Right lobe of liver (tissue), 6 donors: ENCODE measurements at regions of chr12 and their contacts with region 1.

Region 1: DNA sequence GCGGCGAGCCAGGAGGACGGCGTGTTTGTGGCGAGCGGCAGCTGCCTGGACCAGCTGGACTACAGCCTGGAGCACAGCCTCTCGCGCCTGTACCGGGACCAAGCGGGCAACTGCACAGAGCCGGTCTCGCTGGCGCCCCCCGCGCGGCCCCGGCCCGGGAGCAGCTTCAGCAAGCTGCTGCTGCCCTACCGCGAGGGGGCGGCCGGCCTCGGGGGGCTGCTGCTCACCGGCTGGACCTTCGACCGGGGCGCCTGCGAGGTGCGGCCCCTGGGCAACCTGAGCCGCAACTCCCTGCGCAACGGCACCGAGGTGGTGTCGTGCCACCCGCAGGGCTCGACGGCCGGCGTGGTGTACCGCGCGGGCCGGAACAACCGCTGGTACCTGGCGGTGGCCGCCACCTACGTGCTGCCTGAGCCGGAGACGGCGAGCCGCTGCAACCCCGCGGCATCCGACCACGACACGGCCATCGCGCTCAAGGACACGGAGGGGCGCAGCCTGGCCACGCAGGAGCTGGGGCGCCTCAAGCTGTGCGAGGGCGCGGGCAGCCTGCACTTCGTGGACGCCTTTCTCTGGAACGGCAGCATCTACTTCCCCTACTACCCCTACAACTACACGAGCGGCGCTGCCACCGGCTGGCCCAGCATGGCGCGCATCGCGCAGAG is 873 bp downstream of the PLXNC1 start:
- DNase-seq: peak; percentile 65 to 83 (median 69)
- ATAC-seq: peak in 3 of 4 donors; percentile 5 to 44 (median 14)
- H3K4me3 ChIP-seq: peak overlapping the region; percentile 45 to 55 (median 54)
- H3K27ac ChIP-seq: peak overlapping the region in 1 of 3 donors; percentile 49
- H3K4me1 ChIP-seq: peaks cover 0 to 44% (median 15%) of the 10 kb centered on the region in 4 donors
- H3K27me3 ChIP-seq: no peaks in the 10 kb centered on the region
- CTCF ChIP-seq: peak in 3 of 4 donors; percentile 32 to 40 (median 35)
- POLR2A ChIP-seq: no peak

Region 2: GRCh38 chr12:94101738-94102660 is 47.3 kb before region 1 on chr12:
- intact Hi-C with region 1: no loop called
- DNase-seq: peak; percentile 80 to 81 (median 81)
- ATAC-seq: peak; percentile 92 to 95 (median 92)
- H3K4me3 ChIP-seq: peak overlapping the region; percentile 37 to 61 (median 45)
- H3K27ac ChIP-seq: no peak overlapping the region
- H3K4me1 ChIP-seq: peaks cover 0 to 10% (median 0%) of the 10 kb centered on the region in 4 donors
- H3K27me3 ChIP-seq: no peaks in the 10 kb centered on the region
- CTCF ChIP-seq: peak; percentile 77 to 87 (median 80)
- POLR2A ChIP-seq: no peak

Region 3: DNA sequence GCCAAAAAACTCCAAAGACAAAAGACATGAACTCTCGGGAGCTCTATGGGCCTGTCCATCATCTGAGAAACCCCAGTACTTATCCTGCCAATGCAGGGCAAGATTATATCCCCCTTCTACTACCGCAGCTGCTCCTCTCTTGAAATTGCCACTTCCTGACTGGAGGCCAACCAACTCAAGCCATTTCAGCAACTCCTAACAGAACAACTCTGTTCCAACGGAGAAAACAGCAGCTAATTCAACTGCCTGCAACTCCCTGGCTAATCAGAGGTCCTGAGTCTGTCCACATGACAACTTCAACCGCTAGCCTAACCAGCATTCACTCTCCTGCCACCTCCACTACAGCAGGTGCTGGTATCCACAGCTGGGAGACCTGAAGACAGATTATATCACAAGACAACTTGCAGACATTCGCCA is 286.3 kb after region 1 on chr12:
- intact Hi-C with region 1: loop called (anchors 10 kb)
- DNase-seq: no peak
- ATAC-seq: no peak
- H3K4me3 ChIP-seq: no peak overlapping the region
- H3K27ac ChIP-seq: no peak overlapping the region
- H3K4me1 ChIP-seq: peaks cover 0 to 8% (median 0%) of the 10 kb centered on the region in 4 donors
- H3K27me3 ChIP-seq: no peaks in the 10 kb centered on the region
- CTCF ChIP-seq: no peak
- POLR2A ChIP-seq: no peak

Region 4: DNA sequence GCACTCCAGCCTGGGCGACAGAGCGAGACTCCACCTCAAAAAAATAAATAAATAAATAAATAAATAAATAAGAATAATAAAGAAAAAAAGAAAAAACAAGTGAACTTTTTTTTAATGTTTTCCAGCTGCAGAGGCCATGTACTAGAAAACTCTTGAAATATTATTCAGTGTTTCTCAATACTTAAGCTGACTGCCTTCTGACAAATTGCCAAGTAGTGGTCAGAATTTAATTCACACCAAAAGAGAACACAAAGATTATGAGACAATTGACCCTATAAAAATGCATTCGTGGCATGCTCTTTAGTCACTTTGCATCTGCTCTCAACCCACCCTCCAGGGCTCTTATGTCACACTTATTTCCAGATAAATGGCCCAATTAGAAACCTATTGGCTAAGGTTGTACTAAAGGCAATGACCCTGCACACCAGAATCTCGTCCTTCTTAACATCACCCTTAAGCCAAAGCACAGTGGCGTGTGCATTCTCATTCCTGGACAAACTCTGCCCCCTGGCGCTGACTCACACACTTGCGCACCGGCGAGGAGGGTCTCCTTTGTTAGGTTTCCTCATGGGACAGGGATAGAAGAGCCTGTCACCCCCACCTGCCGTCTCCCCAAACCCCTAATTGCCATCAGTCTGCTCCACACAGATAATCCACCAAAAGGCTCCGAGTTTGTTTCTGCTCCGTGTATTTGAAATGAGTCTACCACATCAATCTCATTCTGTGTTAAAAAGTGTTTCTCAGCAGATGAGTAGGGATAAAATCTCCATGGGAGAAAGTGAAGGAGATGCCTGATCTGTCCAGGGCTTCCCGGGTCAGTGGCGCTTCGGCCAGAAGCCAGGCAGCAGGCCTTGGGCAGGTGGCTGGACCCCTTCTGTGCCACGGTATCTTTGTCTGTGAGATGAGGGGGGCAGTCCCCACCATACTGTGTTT is 383.5 kb after region 1 on chr12:
- intact Hi-C with region 1: loop called (anchors 5 kb)
- DNase-seq: peak; percentile 66 to 72 (median 70)
- ATAC-seq: peak; percentile 65 to 82 (median 75)
- H3K4me3 ChIP-seq: no peak overlapping the region
- H3K27ac ChIP-seq: no peak overlapping the region
- H3K4me1 ChIP-seq: peaks cover 0 to 26% (median 12%) of the 10 kb centered on the region in 4 donors
- H3K27me3 ChIP-seq: no peaks in the 10 kb centered on the region
- CTCF ChIP-seq: peak; percentile 77 to 83 (median 81)
- POLR2A ChIP-seq: no peak

Region 5: GRCh38 chr12:94909663-94910062 is 760.4 kb after region 1 on chr12:
- intact Hi-C with region 1: loop called in 1 of 2 experiments (anchors 10 kb)
- DNase-seq: no peak
- ATAC-seq: no peak
- H3K4me3 ChIP-seq: no peak overlapping the region
- H3K27ac ChIP-seq: no peak overlapping the region
- H3K4me1 ChIP-seq: no peaks in the 10 kb centered on the region
- H3K27me3 ChIP-seq: no peaks in the 10 kb centered on the region
- CTCF ChIP-seq: no peak
- POLR2A ChIP-seq: no peak